Activated B cell treated with CpG ODN at 0.5 μM for 24 hours (primary cell): ENCODE measurements at regions of chr9 and their contacts with region 1.

Region 1: DNA sequence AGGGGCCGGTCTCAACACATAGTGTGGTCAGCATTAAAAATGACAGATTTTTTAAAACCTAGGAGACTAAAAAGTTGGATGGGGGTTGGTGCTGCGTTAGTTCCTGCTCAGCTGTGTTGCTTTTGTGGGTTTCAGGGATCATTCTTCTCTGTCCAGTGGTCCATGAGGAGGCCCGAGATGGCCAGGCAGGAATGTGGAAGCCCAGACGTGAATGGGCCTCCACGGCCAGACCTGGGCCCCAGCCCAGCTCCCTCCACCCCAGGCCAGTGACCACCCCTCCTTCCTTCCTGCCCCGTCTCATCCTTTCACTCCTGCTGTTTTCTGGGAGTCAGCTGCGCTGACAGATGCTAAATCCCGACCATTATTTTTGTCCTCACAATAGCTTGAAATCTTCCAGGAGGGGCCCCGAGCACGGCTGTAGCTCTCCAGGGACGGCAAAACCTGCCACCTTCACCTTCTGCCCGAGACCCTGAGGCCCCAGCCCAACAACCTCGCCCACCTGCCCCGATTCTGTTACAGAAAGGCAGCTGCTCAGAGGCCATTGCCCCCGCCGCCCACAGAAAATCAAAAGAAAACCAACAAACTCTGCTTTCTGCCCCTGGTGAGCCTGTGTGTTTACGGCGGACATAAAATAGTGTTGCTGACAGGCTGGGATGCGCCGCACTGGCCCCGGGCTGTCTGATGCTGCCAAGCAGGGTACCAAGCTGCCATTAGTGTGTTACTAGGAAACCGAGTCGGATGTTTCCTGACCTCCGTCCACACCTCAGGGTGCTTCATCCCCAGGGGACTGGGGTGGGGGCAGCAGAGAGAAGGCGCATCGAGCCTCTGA is 83.7 kb upstream of the SARDH start:
- DNase-seq: no peak
- ATAC-seq: peak; percentile 56
- H3K4me3 Mint-ChIP-seq: peak overlapping the region; percentile 81
- H3K27ac Mint-ChIP-seq: peak overlapping the region; percentile 97
- H3K4me1 Mint-ChIP-seq: peaks cover 81% of the 10 kb centered on the region
- H3K27me3 Mint-ChIP-seq: no peaks in the 10 kb centered on the region
- CTCF ChIP-seq: no peak

Region 2: DNA sequence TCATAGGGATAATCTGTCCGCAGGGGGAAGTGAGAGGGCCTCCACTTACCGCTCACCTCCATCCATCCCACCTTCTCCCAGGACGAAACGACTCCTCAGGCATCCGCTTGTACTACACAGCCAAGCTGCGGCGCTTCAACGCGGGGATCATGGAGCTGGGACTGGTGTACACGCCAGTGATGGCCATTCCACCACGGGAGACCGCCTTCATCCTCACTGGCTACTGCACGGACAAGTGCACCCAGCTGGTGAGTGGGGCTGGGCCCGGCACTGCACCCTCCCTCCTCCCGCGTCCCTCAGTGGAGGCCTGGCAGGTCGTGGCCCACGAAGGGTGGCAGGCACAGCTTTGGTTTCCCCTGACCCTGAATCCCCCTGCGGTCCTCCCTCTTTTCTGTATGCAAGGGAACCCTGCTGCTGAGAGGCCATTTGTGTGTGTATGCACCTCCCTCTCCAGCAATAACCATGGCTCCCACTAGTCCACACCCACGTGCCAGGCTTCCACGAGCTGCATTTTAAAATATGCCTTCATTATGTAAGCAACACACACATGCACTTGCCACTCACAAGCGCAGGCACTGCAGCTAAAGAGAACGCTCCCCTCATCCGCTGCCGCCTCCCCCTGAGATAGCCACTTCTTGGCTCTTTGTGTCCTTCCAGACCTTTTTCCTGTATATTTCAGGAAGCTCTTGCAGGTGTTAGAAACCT is 173.9 kb before region 1 on chr9:
- CTCF ChIA-PET with region 1: no interaction called
- POLR2A ChIA-PET with region 1: no interaction called
- intact Hi-C with region 1: no loop called
- DNase-seq: no peak
- ATAC-seq: no peak
- H3K4me3 Mint-ChIP-seq: no peak overlapping the region
- H3K27ac Mint-ChIP-seq: no peak overlapping the region
- H3K4me1 Mint-ChIP-seq: no peaks in the 10 kb centered on the region
- H3K27me3 Mint-ChIP-seq: peaks cover 6% of the 10 kb centered on the region
- CTCF ChIP-seq: no peak

Region 3: DNA sequence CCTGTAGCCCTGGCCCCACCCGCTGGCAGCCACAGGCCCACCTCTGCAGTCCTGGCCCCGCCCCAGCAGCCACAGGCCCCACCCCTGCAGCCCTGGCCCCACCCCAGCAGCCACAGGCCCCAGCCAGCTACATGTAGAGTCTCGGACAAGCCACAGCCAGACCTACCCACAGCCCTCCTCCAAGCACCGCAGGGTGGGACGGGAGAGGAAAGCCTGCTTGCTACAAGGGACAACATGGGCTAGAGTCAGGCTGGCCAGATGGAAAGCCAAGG is 34.1 kb before region 1 on chr9:
- CTCF ChIA-PET with region 1: interaction called, 3 read pairs
- POLR2A ChIA-PET with region 1: interaction called, 4 read pairs
- intact Hi-C with region 1: loop called (anchors 1 kb)
- DNase-seq: peak; percentile 39
- ATAC-seq: peak; percentile 80
- H3K4me3 Mint-ChIP-seq: no peak overlapping the region
- H3K27ac Mint-ChIP-seq: peak overlapping the region; percentile 68
- H3K4me1 Mint-ChIP-seq: peaks cover 90% of the 10 kb centered on the region
- H3K27me3 Mint-ChIP-seq: no peaks in the 10 kb centered on the region
- CTCF ChIP-seq: no peak

Region 4: DNA sequence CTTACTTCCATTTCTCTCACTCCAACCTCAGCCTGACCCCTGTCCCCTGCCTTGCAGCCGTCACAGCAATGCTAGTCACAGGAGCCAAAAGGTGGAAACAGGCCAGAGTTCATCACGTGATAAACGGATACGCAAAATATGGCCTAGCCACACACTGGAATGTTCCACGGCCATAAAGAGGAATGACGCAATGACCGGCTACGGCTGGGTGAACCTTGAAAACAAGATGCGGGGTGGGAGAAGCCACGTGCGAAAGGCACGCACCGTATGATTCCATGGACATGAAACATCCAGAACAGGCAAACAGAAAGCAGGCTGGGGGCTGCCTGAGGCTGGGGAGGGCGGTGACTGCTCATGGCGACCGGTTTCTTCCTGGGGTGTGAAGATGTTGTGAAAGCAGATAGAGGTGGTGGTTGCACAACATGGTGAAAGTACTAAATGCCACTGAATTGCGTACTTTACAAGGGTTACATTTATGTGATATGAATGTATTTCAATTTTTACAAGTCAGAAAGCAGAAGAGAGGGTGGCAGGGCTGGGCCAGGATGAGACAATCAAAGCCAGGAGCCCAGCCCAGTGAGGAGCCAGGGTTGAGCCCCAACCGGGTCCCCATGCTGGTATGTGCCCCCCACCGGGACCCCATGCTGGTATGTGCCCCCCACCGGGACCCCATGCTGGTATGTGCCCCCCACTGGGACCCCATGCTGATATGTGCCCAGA is 34.1 kb after region 1 on chr9:
- CTCF ChIA-PET with region 1: no interaction called
- POLR2A ChIA-PET with region 1: no interaction called
- intact Hi-C with region 1: no loop called
- DNase-seq: no peak
- ATAC-seq: no peak
- H3K4me3 Mint-ChIP-seq: no peak overlapping the region
- H3K27ac Mint-ChIP-seq: no peak overlapping the region
- H3K4me1 Mint-ChIP-seq: peaks cover 23% of the 10 kb centered on the region
- H3K27me3 Mint-ChIP-seq: no peaks in the 10 kb centered on the region
- CTCF ChIP-seq: no peak

Region 5: GRCh38 chr9:133869674-133870405 is 48.0 kb after region 1 on chr9:
- CTCF ChIA-PET with region 1: no interaction called
- POLR2A ChIA-PET with region 1: interaction called, 5 read pairs
- intact Hi-C with region 1: loop called (anchors 5 kb)
- DNase-seq: no peak
- ATAC-seq: peak; percentile 69
- H3K4me3 Mint-ChIP-seq: peak overlapping the region; percentile 6
- H3K27ac Mint-ChIP-seq: peak overlapping the region; percentile 59
- H3K4me1 Mint-ChIP-seq: peaks cover 45% of the 10 kb centered on the region
- H3K27me3 Mint-ChIP-seq: no peaks in the 10 kb centered on the region
- CTCF ChIP-seq: no peak

Region 6: GRCh38 chr9:133880136-133880535 is 58.3 kb after region 1 on chr9:
- CTCF ChIA-PET with region 1: no interaction called
- POLR2A ChIA-PET with region 1: no interaction called
- intact Hi-C with region 1: no loop called
- DNase-seq: no peak
- ATAC-seq: no peak
- H3K4me3 Mint-ChIP-seq: no peak overlapping the region
- H3K27ac Mint-ChIP-seq: no peak overlapping the region
- H3K4me1 Mint-ChIP-seq: peaks cover 45% of the 10 kb centered on the region
- H3K27me3 Mint-ChIP-seq: no peaks in the 10 kb centered on the region
- CTCF ChIP-seq: no peak